GM12878 (cell line): ENCODE measurements at regions of chr9 and their contacts with region 1.

Region 1: DNA sequence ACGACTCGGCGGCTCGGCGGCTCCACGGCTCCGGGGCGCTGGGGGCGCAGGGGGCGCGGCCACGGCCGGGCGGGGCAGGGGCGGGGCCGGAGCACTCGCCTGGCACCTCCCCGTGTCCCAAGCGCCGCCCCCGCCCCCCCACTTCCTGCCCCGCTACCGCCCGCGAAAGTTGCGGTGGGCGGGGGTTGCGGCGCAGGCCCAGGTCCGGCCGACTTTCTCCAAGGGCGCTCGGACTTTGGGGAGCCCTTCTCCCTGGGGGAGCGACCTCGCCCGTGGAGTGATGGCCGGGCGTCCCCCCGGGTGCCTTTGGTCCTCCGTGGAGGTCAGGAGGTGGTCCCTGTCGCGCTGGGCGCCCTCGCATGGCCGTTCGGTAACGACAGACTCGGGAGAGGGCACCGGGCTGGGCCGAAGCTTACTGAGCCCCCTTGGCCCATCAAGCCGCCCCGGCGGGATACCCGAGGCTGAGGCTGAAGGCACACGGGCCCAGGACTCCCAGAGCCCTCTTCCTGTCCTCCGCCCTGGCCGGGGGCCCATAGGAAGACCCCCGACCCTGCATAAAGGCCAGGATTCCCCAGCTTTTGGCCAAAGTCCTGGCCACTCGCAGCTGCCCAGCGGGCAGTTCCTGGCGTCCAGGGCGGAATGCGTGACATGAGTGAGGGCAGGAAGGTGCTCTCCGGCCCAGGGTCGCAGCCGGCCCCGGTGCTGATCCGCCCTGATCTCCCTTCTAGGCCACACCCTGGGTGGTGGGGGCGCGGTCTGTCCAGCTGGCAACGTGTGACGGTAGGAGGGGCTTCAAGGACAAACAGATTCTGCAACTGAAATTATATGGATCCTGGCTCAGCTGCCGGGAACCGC is 883 bp upstream of the VAV2 start:
- DNase-seq: no peak
- ATAC-seq: peak; percentile 73
- H3K4me3 ChIP-seq: peak overlapping the region; percentile 88
- H3K27ac ChIP-seq: peak overlapping the region; percentile 86
- H3K4me1 ChIP-seq: peaks cover 15% of the 10 kb centered on the region
- H3K27me3 ChIP-seq: no peaks in the 10 kb centered on the region
- CTCF ChIP-seq: peak; percentile 34 to 56 (median 47); a peak in 4 of 6 replicates
- EP300 ChIP-seq: no peak
- POLR2A ChIP-seq: peak; percentile 78
- RAD21 ChIP-seq: peak; percentile 22; the same call in 1 of the 2 replicates

Region 2: DNA sequence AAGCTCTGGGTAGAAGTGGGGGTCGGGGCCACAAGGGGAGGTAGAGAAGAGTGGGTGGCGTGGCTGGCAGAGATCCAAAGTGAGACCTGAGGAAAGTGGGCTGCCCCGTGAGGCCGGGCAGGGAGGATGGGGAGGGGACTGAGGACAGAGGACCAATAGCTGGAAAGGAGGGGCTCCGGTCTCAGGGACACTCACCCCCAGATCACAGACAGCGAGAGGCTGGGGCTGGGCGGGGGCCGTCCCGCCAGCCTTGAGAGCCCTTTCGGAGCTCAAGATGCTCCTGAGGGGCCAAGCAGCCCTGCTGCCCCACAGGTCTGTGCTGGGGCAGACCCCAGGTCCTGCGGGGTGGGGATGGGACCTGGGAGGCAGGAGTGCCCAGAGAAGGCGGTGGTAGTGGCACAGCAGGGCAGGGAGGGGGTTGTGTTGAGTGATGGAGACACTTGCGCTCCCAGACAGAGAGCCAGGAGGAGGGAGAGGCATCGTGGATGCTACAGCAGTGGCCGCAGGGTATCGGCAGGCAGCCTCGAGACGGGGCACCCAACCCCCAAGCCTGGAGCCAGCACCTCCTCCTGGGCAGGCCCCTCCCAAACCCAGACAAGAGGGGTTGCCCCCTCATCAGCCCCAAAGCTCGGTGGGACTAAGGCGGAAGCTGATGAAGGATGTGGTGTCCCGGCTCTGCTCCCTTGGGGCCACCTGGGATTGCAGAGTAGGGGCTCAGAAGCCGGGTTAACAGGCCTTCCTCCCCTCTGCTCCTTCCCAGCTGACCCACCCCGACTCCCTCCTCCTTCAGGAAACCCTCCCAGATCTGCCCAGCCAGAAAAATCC is 258.2 kb before region 1 on chr9:
- CTCF ChIA-PET with region 1: interaction called, 5 read pairs
- POLR2A ChIA-PET with region 1: no interaction called
- RAD21 ChIA-PET with region 1: interaction called, 10 read pairs
- SMC1A ChIA-PET with region 1: interaction called, 8 read pairs
- in situ Hi-C with region 1: no loop called
- intact Hi-C with region 1: no loop called
- DNase-seq: no peak
- ATAC-seq: peak; percentile 23
- H3K4me3 ChIP-seq: no peak overlapping the region
- H3K27ac ChIP-seq: no peak overlapping the region
- H3K4me1 ChIP-seq: no peaks in the 10 kb centered on the region
- H3K27me3 ChIP-seq: no peaks in the 10 kb centered on the region; a peak in 1 of 4 replicates
- CTCF ChIP-seq: no peak
- EP300 ChIP-seq: no peak
- POLR2A ChIP-seq: no peak
- RAD21 ChIP-seq: no peak

Region 3: GRCh38 chr9:133787754-133788025 is 205.3 kb before region 1 on chr9:
- CTCF ChIA-PET with region 1: interaction called, 177 read pairs
- POLR2A ChIA-PET with region 1: interaction called, 16 read pairs
- RAD21 ChIA-PET with region 1: interaction called, 76 read pairs
- SMC1A ChIA-PET with region 1: interaction called, 53 read pairs
- in situ Hi-C with region 1: loop called (anchors 5 kb)
- intact Hi-C with region 1: loop called (anchors 1 kb)
- DNase-seq: peak; percentile 16
- ATAC-seq: peak; percentile 97
- H3K4me3 ChIP-seq: no peak overlapping the region
- H3K27ac ChIP-seq: peak overlapping the region; percentile 96
- H3K4me1 ChIP-seq: peaks cover 38% of the 10 kb centered on the region
- H3K27me3 ChIP-seq: no peaks in the 10 kb centered on the region
- CTCF ChIP-seq: no peak
- EP300 ChIP-seq: no peak
- POLR2A ChIP-seq: no peak; the same call in 1 of the 2 replicates
- RAD21 ChIP-seq: no peak

Region 4: GRCh38 chr9:133897648-133898047 is 95.4 kb before region 1 on chr9:
- CTCF ChIA-PET with region 1: interaction called, 4 read pairs
- POLR2A ChIA-PET with region 1: interaction called, 5 read pairs
- RAD21 ChIA-PET with region 1: interaction called, 5 read pairs
- SMC1A ChIA-PET with region 1: no interaction called
- in situ Hi-C with region 1: no loop called
- intact Hi-C with region 1: loop called (anchors 1 kb)
- DNase-seq: no peak
- ATAC-seq: no peak
- H3K4me3 ChIP-seq: no peak overlapping the region
- H3K27ac ChIP-seq: no peak overlapping the region
- H3K4me1 ChIP-seq: peaks cover 25% of the 10 kb centered on the region
- H3K27me3 ChIP-seq: no peaks in the 10 kb centered on the region
- CTCF ChIP-seq: no peak
- EP300 ChIP-seq: no peak
- POLR2A ChIP-seq: no peak
- RAD21 ChIP-seq: no peak

Region 5: DNA sequence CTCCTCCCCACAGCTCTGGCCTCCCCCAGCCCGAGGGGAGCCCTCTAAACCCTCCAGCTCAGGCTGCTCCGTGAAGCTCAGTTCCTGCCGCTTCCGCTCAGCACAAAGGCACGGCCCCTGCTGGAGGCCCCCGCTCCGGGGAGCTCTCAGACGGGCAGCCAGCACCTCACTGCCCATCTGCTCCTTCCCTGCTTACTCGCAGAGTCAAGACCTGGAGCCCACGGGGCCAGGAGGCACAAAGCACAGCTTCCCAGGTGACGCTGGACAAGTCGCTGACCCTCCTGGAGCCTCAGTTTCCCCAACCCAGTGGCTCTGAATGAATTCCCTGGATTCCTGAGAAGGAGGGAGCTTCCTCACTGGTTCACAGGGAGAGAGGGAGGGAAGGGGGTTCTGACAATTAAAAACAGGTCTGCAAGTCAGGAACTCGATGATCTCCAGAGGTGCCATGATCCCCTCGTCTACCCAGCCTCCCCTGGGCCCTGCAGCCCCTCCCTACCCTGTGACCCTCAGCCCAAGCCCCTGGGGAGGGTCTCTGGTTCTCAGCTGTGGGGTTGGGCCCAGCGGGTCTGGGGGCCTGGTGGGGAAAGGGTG is 37.1 kb before region 1 on chr9:
- CTCF ChIA-PET with region 1: interaction called, 26 read pairs
- POLR2A ChIA-PET with region 1: interaction called, 9 read pairs
- RAD21 ChIA-PET with region 1: interaction called, 29 read pairs
- SMC1A ChIA-PET with region 1: interaction called, 25 read pairs
- in situ Hi-C with region 1: no loop called
- intact Hi-C with region 1: loop called (anchors 2 kb)
- DNase-seq: no peak
- ATAC-seq: peak; percentile 59
- H3K4me3 ChIP-seq: peak overlapping the region; percentile 67
- H3K27ac ChIP-seq: peak overlapping the region; percentile 99
- H3K4me1 ChIP-seq: peaks cover 57% of the 10 kb centered on the region
- H3K27me3 ChIP-seq: no peaks in the 10 kb centered on the region
- CTCF ChIP-seq: peak in 1 of 3 experiments; percentile 12; a peak in 1 of 6 replicates
- EP300 ChIP-seq: no peak
- POLR2A ChIP-seq: peak; percentile 83
- RAD21 ChIP-seq: no peak

Region 6: DNA sequence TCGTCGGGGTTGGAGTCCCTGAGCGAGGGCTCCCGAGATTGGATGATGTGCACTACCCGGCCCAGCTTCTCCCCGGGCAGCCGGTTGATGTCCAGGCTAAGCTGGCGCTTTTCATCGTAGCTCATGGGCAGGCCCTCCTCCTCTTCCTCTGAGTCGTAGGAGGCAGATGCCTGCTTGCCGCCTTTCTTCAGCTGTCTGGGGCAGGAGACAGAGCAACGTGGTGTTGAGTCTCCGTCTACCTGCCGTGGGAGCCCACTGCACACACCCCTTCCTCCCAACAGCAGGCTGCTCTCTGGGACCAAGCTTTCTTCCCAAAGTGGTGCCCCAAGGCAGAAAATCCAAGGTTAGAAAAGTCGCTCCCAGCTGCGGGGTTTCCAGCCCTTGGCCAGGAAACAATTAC is 43.1 kb after region 1 on chr9:
- CTCF ChIA-PET with region 1: no interaction called
- POLR2A ChIA-PET with region 1: no interaction called
- RAD21 ChIA-PET with region 1: no interaction called
- SMC1A ChIA-PET with region 1: no interaction called
- in situ Hi-C with region 1: no loop called
- intact Hi-C with region 1: no loop called
- DNase-seq: no peak
- ATAC-seq: no peak
- H3K4me3 ChIP-seq: no peak overlapping the region
- H3K27ac ChIP-seq: no peak overlapping the region
- H3K4me1 ChIP-seq: no peaks in the 10 kb centered on the region
- H3K27me3 ChIP-seq: no peaks in the 10 kb centered on the region
- CTCF ChIP-seq: no peak
- EP300 ChIP-seq: no peak
- POLR2A ChIP-seq: no peak
- RAD21 ChIP-seq: no peak